Vagina (tissue), 2 donors: ENCODE measurements at regions of chr14 and their contacts with region 1.

Region 1: GRCh38 chr14:51780006-51780692 is 80.3 kb upstream of the GNG2 start:
- DNase-seq: no peak
- H3K4me3 ChIP-seq: no peak overlapping the region
- H3K27ac ChIP-seq: no peak overlapping the region
- H3K4me1 ChIP-seq: peaks cover 6% of the 10 kb centered on the region
- H3K27me3 ChIP-seq: no peaks in the 10 kb centered on the region
- CTCF ChIP-seq: peak; percentile 47 to 78 (median 57)
- POLR2A ChIP-seq: no peak

Region 2: DNA sequence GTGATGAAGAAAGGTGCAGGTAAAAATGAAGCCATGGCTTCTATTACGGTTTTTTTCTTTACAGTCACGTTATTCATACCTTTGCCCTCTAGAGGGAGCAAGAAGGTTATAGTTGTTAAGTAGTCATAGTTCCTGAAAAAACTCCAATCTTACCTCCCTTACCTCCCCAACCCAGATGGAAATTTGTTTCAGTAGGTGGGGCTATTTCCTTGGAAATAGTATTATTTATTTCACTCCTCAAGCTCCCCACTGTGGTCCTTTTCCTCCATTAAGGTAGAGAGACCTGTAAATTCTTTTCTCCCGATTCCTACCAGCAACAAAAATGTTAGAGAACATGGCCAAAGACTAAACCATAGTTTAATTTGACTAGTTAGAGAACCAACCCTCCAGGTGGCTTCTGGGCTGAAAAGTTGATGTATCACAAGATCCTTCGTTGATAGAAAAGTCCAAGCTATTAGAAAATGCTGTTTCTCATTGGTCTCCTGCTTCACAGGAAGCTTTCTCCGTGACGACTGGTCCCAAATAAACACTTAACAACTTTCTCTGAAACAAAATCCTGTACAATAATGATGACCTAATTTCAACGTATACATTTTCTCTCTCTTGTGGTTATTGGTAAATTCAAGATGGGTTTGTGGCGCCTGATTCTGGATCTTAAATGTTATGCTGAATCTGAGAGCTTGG is 496.6 kb before region 1 on chr14:
- intact Hi-C with region 1: loop called (anchors 2 kb)
- DNase-seq: no peak
- H3K4me3 ChIP-seq: no peak overlapping the region
- H3K27ac ChIP-seq: peak overlapping the region; percentile 1
- H3K4me1 ChIP-seq: no peaks in the 10 kb centered on the region
- H3K27me3 ChIP-seq: no peaks in the 10 kb centered on the region
- CTCF ChIP-seq: peak; percentile 51 to 95 (median 92)
- POLR2A ChIP-seq: no peak

Region 3: GRCh38 chr14:51651388-51652167 is 128.6 kb before region 1 on chr14 and contains the start of gene FRMD6:
- intact Hi-C with region 1: loop called (anchors 10 kb)
- DNase-seq: peak in 1 of 2 donors; percentile 92
- H3K4me3 ChIP-seq: peak within 1 kb of the TSS; percentile 53 to 83
- H3K27ac ChIP-seq: peak within 1 kb of the TSS; percentile 97
- H3K4me1 ChIP-seq: peaks cover 41% of the 10 kb centered on the region
- H3K27me3 ChIP-seq: no peaks in the 10 kb centered on the region
- CTCF ChIP-seq: peak; percentile 28 to 71 (median 50)
- POLR2A ChIP-seq: peak in 1 of 2 donors; percentile 74
- total RNA-seq, gene FRMD6: 114 TPM

Region 4: GRCh38 chr14:51716610-51717009 is 63.5 kb before region 1 on chr14:
- intact Hi-C with region 1: no loop called
- DNase-seq: no peak
- H3K4me3 ChIP-seq: no peak overlapping the region
- H3K27ac ChIP-seq: no peak overlapping the region
- H3K4me1 ChIP-seq: no peaks in the 10 kb centered on the region
- H3K27me3 ChIP-seq: no peaks in the 10 kb centered on the region
- CTCF ChIP-seq: no peak
- POLR2A ChIP-seq: no peak